Activated naive CD4-positive, alpha-beta T cell treated with anti-CD3 and anti-CD28 coated beads, Interleukin-2, amount 10 ng/mL, durations not matched to agents 7 days and 5 days (primary cell): ENCODE measurements at regions of chr10 and their contacts with region 1.

Region 1: DNA sequence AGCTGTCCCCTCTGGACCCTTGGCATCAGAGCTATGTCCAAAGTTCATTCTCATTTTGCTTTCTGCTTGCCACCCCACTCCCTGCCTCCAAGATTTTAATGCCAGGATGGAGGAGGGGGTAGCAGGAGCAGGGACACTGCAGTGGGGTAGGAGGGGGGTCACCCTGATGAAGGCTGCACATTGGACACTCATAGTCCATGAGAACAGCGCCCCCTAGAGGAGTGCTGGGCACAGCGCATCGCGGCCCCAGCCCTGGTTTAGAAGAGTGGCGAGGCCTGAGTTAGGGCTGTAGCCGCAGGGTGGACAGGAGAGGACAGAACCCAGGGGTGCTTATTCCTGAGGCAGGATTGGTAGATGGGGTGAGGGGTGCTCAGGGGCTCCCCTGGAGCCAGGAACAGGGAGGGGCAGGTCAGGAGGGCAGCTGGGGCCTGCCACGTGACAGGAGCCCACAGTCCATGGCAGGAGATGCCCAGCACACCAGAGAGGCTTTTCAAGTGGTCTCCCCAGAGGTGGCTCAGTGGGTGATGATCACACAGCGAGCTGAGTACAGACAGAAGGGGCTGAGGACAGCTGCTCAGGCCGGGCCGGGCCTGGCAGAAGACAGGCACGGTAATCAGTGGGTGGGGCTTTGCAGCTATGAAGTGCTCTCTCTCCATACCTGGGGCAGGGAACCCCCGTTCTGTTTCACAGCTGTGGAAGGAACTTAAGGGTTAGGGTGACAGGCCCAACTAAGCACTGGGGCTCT is 71.4 kb downstream of the NEURL1 start:
- DNase-seq: peak; percentile 54
- H3K4me3 Mint-ChIP-seq: no peak overlapping the region
- H3K27ac Mint-ChIP-seq: no peak overlapping the region
- H3K4me1 Mint-ChIP-seq: no peaks in the 10 kb centered on the region
- H3K27me3 Mint-ChIP-seq: peaks cover 33% of the 10 kb centered on the region

Region 2: DNA sequence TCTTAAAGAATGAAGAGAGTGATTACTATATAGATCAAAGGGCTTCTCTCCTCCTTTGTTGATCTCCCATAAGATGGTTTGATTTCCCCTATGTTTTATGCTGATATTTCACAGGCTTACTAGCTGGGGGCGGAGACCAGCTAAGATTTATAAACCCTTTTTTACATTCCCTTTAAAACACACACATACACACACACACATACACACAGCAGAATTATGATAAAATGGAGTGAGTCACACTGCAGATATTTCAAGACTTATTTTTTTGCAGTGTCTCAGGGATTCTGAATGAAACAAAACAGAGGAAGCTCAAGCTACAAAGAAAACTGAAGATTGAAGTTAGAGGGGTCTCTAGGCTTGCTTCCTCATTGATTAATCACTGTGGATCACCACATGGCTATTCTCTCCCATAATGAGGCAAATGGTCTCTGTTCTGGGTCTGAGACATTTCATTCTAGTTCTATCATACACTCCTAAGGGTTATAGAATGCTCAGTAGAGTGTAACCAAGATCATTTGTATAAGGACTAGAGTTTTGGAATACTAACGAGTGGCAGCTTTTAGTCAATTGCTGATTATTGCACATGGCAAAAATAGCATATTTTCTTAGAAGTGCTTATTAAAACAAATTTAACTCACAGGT is 269.5 kb before region 1 on chr10:
- CTCF ChIA-PET with region 1: no interaction called
- DNase-seq: no peak
- H3K4me3 Mint-ChIP-seq: no peak overlapping the region
- H3K27ac Mint-ChIP-seq: no peak overlapping the region
- H3K4me1 Mint-ChIP-seq: no peaks in the 10 kb centered on the region
- H3K27me3 Mint-ChIP-seq: peaks cover 7% of the 10 kb centered on the region

Region 3: DNA sequence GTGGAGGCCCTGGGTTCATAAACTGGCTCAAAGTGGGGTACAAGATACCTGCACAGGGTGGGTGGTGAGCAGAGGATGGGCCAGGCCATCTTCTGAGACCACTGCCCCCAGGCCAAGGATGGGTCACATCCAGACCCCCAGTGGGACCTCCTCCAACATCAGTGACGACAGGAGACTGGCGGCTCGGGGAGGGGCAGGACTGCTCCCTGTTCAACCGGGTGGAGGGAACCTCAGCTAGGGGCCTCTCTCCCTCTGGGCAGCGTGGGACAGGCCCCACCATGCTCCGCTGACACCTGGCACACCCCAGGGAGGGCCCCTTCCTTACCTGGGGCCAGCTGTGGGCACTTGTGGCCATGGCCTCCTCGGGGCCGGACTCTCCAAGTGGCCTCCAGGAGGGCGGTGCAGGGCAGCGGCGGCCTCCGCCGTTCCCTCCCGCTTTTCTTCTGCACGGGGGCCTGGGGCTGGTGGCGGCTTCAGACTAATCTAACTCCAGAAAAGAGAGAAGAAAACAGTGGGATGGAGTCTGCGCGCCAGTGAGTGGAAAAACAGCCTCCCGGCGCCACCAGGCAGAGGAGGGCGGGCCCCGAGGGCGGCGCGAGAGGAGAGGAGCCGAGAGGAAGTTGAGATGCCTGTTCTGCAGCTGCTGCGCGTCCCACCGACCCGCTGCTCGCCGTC is 113.0 kb before region 1 on chr10 and contains the start of gene CALHM2:
- CTCF ChIA-PET with region 1: no interaction called
- DNase-seq: peak; percentile 77
- H3K4me3 Mint-ChIP-seq: peak within 1 kb of the TSS; percentile 99
- H3K27ac Mint-ChIP-seq: peak within 1 kb of the TSS; percentile 91
- H3K4me1 Mint-ChIP-seq: peaks cover 72% of the 10 kb centered on the region
- H3K27me3 Mint-ChIP-seq: no peaks in the 10 kb centered on the region

Region 4: GRCh38 chr10:103542764-103543616 is 22.0 kb before region 1 on chr10:
- CTCF ChIA-PET with region 1: interaction called, 12 read pairs
- DNase-seq: peak; percentile 61
- H3K4me3 Mint-ChIP-seq: peak overlapping the region; percentile 31
- H3K27ac Mint-ChIP-seq: peak overlapping the region; percentile 46
- H3K4me1 Mint-ChIP-seq: peaks cover 8% of the 10 kb centered on the region
- H3K27me3 Mint-ChIP-seq: peaks cover 69% of the 10 kb centered on the region

Region 5: DNA sequence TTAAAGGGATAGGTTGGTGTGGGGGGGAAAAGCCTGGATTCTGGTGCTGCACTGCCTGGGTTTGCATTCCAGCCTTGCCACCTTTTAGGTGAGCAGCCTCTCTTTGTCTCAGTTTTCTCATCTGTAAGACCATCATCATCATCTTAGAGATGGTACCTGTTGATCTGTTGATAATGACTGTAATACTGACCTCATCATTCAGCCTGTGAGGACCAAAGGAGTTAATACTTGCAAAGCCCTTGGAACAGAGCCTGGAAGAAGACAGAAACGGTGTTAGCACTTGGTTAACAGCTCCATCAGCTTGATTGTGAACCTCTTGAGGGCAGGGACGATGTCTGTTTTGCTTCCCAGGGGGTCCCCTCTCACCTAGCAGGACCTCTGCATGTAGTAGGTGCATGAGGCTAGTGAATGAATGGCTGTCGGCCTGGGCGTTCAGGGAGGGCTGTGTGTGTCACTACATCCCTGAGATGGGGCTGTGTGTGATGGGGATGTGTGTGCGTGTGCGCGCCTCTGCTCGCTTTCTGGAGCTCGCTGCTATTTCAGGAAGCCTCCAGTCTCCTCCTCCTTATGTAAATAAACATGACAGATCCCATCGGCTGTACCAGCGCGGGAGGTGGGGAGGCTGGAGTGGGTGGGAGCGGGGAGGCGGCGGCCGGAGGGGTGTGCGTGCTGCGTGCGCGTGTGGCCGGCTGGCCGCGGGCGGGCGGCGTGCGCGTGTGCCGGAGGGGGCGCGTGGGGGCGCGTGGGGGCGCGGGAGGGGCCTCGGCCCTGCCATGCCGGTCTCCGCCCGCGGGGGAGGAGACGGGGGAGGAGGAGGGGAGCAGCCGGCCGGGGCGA is 10.2 kb before region 1 on chr10:
- CTCF ChIA-PET with region 1: interaction called, 16 read pairs
- DNase-seq: peak; percentile 53
- H3K4me3 Mint-ChIP-seq: peak overlapping the region; percentile 62
- H3K27ac Mint-ChIP-seq: peak overlapping the region; percentile 67
- H3K4me1 Mint-ChIP-seq: peaks cover 10% of the 10 kb centered on the region
- H3K27me3 Mint-ChIP-seq: peaks cover 81% of the 10 kb centered on the region